Right cardiac atrium (tissue), 5 donors: ENCODE measurements at regions of chr1 and their contacts with region 1.

Region 1: DNA sequence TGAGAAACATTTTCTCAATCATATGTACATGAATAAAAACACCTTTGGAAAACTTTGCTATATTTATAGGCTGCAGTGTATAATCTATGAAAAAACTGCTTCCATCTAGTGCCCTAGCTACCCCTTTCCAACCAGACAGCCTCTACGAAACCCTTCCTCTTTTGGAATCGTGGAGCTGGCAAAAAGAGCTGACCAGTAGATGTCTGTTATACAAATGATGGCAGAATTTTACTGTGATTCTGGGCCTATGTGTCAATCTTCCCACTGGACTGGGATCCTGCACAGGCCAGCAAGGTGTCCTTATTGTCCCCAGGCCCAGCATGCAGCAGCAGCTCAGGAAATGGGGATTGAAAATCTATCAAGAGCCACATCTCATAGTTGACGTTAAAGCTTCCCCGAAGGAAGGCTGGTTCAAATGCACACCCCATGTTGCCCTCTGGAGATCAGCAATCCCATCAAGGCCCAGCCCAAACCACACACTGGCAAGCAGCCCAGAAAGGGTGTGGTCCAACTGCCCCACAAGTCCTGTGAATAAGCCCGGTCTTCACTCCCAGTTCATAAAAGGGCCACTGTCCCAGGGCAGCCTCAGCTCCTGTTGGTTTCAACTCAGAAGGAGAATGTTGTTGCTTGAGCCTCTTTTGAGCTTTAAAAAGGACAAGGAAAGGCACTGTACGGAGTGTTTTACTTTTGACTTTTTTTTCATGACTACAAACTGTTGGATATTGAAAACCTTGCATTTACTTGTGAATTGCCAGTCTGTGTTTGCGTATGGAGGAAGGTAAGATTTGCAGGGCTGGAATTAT is 8.7 kb upstream of the FAM20B start:
- DNase-seq: peak; percentile 88 to 95 (median 94)
- ATAC-seq: peak; percentile 90 to 92
- H3K4me3 ChIP-seq: no peak overlapping the region
- H3K27ac ChIP-seq: no peak overlapping the region
- H3K4me1 ChIP-seq: peaks cover 4% of the 10 kb centered on the region
- H3K27me3 ChIP-seq: no peaks in the 10 kb centered on the region

Region 2: DNA sequence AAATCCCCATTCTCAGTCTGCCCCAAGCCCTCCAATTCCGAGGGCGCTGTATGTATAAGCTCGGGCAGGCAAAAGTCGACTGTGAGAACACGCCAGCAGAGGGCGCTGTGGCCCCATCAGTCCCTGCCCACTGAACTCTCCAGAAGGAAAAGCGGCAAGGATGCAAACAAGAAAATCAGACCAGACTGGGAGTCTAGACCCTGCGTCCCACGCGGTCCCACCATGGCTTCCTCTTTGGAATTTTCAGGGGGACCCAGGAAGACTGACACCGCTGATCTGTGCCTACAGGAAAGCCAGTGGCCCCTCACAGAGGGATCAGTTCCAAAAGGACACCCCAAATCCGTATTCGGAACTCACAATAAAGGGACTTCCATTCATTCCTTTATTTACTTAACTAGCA is 484.6 kb before region 1 on chr1:
- intact Hi-C with region 1: loop called in 1 of 4 experiments (anchors 10 kb)
- DNase-seq: peak; percentile 80 to 93 (median 93)
- ATAC-seq: peak; percentile 65 to 67
- H3K4me3 ChIP-seq: no peak overlapping the region
- H3K27ac ChIP-seq: no peak overlapping the region
- H3K4me1 ChIP-seq: peaks cover 9% of the 10 kb centered on the region
- H3K27me3 ChIP-seq: no peaks in the 10 kb centered on the region

Region 3: DNA sequence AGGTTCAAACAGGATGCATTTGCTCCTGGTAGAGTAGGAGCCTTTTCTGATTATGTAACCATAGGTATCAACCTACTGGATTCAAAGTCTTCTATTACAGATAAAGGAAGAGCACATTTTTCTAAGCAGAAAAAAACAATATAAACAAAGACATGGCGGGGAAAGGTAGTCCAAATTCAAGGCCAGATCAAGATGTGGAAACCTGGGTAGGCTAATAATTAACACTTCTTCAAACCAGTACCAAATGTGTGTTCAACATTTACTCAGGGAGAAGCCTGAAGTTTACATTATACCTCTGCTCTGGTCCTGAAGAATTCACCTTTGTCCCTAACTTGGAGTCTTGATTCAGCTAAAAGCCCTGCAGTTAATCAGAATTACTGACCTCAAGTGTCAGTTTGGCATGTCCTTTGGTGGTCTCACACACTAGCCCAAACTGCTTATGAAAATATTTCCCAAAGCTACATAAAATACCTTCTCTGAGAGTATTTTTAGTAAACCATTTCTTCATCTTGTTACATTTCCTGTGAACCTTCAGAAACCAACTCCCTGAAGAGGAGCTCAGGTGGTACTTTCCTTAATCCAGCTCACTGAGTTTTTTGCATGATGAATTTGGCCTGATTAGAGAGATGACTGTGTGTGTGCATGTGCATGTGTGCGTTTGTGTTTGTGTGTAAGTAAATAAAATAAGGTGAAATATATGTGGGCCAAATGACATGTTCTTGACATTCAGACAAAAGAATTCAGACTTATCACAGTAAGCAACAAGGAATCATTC is 135.1 kb after region 1 on chr1:
- intact Hi-C with region 1: no loop called
- DNase-seq: no peak
- ATAC-seq: no peak
- H3K4me3 ChIP-seq: no peak overlapping the region
- H3K27ac ChIP-seq: no peak overlapping the region
- H3K4me1 ChIP-seq: peaks cover 3% of the 10 kb centered on the region
- H3K27me3 ChIP-seq: no peaks in the 10 kb centered on the region